Activated CD4-positive, alpha-beta T cell treated with anti-CD3 and anti-CD28 coated beads, Interleukin-2, amount 10 ng/mL, durations not matched to agents 24 days and 14 days (primary cell): ENCODE measurements at regions of chr1 and their contacts with region 1.

Region 1: GRCh38 chr1:19477284-19478249 is 7.8 kb downstream of the CAPZB start:
- DNase-seq: peak; percentile 82
- H3K4me3 Mint-ChIP-seq: peak overlapping the region; percentile 85
- H3K27ac Mint-ChIP-seq: peak overlapping the region; percentile 94
- H3K4me1 Mint-ChIP-seq: peaks cover 86% of the 10 kb centered on the region
- H3K27me3 Mint-ChIP-seq: no peaks in the 10 kb centered on the region

Region 2: DNA sequence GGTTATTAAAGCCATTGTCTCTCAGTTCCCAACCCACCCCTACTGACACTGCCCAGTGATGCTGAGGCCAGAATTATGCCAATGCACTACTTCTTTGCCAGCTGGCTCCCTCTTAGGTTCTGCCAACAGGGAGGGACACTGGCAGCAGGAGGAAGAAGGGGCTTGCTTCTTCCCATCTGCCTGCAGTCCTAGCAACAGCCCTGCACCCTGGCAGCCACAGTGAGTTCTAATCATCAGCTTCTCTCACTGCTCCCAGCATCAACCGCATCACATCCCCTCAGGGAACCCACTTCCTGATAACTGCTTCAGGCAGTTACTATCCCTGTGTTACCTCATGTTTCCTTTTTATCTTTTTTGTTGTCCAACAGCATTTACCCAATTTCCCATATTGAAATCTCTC is 353.7 kb before region 1 on chr1:
- intact Hi-C with region 1: no loop called
- DNase-seq: peak; percentile 78
- H3K4me3 Mint-ChIP-seq: peak overlapping the region; percentile 58
- H3K27ac Mint-ChIP-seq: peak overlapping the region; percentile 84
- H3K4me1 Mint-ChIP-seq: peaks cover 34% of the 10 kb centered on the region
- H3K27me3 Mint-ChIP-seq: no peaks in the 10 kb centered on the region

Region 3: DNA sequence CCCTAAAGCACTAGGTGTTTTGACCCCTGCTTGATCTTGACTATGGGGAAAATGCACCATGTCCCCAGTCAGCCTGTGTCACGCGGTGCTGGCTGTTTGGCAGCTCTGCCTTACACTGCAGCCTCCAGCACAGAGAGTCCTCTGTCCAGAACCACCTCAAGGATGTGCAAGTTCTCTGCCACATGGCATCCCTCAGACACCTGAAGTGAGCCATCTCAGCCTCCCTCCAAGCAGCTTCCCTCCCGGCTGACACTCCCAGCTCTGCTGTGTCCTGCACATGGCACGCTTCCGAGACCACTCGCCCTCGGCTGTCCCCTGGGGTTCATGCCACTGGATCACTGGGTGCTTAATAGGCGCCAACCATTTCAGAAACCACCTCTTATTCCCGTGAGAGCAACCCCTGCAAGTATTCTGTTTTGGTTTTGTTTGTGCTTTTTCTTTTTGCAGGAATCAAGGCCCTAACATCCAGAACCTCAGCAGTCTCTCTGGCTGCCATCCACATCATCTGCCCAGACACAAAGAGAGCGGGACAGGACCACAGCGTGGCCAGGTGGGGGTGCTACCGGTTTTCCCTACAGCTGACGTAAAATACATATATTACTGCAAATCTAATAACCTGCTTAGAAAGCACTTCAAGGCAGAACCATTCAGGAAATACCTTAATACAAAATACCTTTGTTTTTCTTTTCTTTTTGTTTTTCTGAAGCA is 37.9 kb before region 1 on chr1:
- intact Hi-C with region 1: loop called (anchors 5 kb)
- DNase-seq: no peak
- H3K4me3 Mint-ChIP-seq: no peak overlapping the region
- H3K27ac Mint-ChIP-seq: peak overlapping the region; percentile 67
- H3K4me1 Mint-ChIP-seq: peaks cover 65% of the 10 kb centered on the region
- H3K27me3 Mint-ChIP-seq: no peaks in the 10 kb centered on the region

Region 4: DNA sequence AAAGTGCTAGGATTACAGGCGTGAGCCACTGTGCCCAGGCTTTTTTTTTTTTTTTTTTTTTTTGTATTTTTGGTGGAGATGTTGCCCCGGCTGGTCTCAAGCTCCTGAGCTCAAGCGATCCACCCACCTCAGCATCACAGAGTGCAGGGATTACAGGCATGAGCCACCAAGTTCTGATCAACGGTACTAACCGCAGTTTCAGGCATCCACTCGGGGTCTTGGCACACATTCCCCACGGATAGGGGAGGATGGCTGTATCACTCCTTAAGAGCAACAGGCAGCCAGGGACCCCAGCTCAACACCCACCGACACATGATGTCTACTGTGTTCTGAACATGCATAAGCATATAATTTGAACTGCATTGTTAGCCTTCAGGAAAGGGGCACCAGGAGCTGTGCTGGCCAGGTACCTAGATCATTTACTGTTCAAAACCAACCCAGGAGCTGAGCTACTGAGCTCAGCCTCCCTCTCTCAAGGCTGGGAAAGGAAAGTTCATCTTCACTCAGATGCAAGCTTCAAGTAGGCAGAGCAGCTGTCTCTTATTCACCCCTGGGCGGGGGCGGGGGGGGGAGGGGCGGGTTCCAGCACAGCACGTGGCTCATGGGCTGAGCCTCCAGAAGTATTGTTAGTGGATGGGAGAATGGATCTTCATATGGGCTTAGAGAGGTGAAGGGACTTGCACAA is 16.9 kb before region 1 on chr1:
- intact Hi-C with region 1: loop called (anchors 2 kb)
- DNase-seq: no peak
- H3K4me3 Mint-ChIP-seq: peak overlapping the region; percentile 61
- H3K27ac Mint-ChIP-seq: peak overlapping the region; percentile 72
- H3K4me1 Mint-ChIP-seq: peaks cover 73% of the 10 kb centered on the region
- H3K27me3 Mint-ChIP-seq: no peaks in the 10 kb centered on the region